Gastrocnemius medialis (tissue), 4 donors: ENCODE measurements at regions of chr22 and their contacts with region 1.

Region 1: GRCh38 chr22:32057111-32057755 is 14.2 kb downstream of the SLC5A1 start:
- DNase-seq: no peak
- ATAC-seq: no peak
- H3K4me3 ChIP-seq: no peak overlapping the region
- H3K27ac ChIP-seq: no peak overlapping the region
- H3K4me1 ChIP-seq: peaks cover 13 to 18% of the 10 kb centered on the region in 2 donors
- H3K27me3 ChIP-seq: no peaks in the 10 kb centered on the region
- CTCF ChIP-seq: no peak
- POLR2A ChIP-seq: no peak

Region 2: GRCh38 chr22:32020117-32020516 is 37.1 kb before region 1 on chr22:
- in situ Hi-C with region 1: no loop called
- intact Hi-C with region 1: no loop called
- DNase-seq: no peak
- ATAC-seq: peak; percentile 41 to 58
- H3K4me3 ChIP-seq: no peak overlapping the region
- H3K27ac ChIP-seq: no peak overlapping the region
- H3K4me1 ChIP-seq: no peaks in the 10 kb centered on the region
- H3K27me3 ChIP-seq: peaks cover 0 to 3% (median 0%) of the 10 kb centered on the region in 3 donors
- CTCF ChIP-seq: no peak
- POLR2A ChIP-seq: no peak

Region 3: DNA sequence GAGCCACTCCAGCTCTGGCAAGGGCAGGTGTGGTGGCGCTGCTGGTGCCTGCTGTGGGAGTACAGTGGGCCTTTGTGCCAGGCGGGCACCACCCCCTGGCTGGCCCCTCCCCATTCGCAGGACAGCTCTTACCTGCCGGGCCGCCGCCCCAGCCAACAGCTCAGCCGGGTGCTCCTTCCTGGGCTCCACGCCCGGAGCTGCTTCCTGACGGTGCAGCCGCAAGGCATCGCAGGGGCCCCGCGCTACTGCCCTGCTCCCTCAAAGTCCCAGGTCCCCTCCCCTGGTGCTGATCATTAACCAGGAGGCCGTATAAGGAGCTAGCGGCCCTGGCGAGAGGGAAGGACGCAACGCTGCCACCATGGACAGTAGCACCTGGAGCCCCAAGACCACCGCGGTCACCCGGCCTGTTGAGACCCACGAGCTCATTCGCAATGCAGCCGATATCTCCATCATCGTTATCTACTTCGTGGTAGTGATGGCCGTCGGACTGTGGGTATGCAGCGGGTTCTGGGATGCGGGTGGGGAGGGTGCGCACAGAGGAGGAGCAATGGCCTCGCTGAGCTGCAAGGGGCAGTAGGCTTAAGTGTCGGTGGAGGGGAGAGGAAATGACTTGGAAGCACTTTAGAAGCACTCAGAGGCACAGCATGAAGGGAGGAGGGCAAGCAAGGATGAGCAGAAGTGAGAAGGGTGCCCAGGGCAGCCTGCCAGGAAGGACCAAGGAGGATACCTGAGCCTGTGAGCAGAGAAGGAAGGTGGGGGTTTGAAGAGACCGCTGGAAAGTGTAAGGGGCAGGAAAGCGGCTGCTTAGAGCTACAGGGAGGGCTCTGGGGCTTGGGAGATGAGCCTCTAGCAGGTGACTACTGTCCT is 14.1 kb before region 1 on chr22 and contains the start of gene SLC5A1:
- in situ Hi-C with region 1: no loop called
- intact Hi-C with region 1: loop called (anchors 2 kb)
- DNase-seq: no peak
- ATAC-seq: no peak
- H3K4me3 ChIP-seq: no peak within 1 kb of the TSS
- H3K27ac ChIP-seq: peak within 1 kb of the TSS in 1 of 4 donors; percentile 63
- H3K4me1 ChIP-seq: peaks cover 10 to 17% of the 10 kb centered on the region in 2 donors
- H3K27me3 ChIP-seq: no peaks in the 10 kb centered on the region
- CTCF ChIP-seq: no peak
- POLR2A ChIP-seq: no peak
- total RNA-seq, gene SLC5A1: 0.24 TPM in 1 of 4 donors, not detected in the others